Astrocyte of the cerebellum (primary cell): ENCODE measurements at regions of chr7 and their contacts with region 1.

Region 1: GRCh38 chr7:110762546-110763225 is 328.2 kb upstream of the LRRN3 start:
- DNase-seq: no peak
- H3K4me3 ChIP-seq: no peak overlapping the region
- CTCF ChIP-seq: no peak

Region 2: GRCh38 chr7:110724811-110725210 is 37.9 kb before region 1 on chr7:
- in situ Hi-C with region 1: loop called (anchors 5 kb)
- DNase-seq: no peak
- H3K4me3 ChIP-seq: no peak overlapping the region
- CTCF ChIP-seq: no peak